ENCODE measurements at regions of chr6 and their contacts with region 1.

Region 1: DNA sequence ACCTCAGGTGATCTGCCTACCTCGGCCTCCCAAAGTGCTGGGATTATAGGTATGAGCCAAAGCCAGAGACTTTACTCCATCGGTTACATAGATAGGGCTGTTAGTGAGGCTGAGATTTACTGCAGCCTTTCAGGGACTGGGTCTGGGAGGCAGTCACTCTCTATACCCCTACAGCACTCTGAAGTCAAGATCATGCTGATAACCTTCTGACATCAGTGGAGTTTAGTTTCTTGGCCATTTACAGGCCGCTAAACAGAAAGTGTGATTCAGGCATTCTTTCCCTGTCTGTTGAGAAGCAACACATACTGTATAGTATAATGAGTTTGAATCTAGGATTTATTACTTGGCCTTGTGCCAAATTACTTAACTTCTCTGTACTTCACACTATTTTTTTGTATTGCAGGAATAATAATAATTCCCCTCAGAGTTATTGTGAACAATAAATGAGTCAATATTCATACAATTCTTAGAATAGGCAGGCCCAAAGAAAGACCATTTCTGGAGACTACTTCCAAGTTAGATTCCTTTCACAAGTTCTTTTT is 4.0 kb downstream of the ZNF391 start:
- DNase-seq: no peak
- H3K4me3 ChIP-seq: no peak overlapping the region
- H3K27ac ChIP-seq: no peak overlapping the region
- H3K4me1 ChIP-seq: peaks cover 0 to 17% (median 13%) of the 10 kb centered on the region in 4 donors
- H3K27me3 ChIP-seq: no peaks in the 10 kb centered on the region
- CTCF ChIP-seq: no peak
- EP300 ChIP-seq: no peak
- POLR2A ChIP-seq: no peak

Region 2: DNA sequence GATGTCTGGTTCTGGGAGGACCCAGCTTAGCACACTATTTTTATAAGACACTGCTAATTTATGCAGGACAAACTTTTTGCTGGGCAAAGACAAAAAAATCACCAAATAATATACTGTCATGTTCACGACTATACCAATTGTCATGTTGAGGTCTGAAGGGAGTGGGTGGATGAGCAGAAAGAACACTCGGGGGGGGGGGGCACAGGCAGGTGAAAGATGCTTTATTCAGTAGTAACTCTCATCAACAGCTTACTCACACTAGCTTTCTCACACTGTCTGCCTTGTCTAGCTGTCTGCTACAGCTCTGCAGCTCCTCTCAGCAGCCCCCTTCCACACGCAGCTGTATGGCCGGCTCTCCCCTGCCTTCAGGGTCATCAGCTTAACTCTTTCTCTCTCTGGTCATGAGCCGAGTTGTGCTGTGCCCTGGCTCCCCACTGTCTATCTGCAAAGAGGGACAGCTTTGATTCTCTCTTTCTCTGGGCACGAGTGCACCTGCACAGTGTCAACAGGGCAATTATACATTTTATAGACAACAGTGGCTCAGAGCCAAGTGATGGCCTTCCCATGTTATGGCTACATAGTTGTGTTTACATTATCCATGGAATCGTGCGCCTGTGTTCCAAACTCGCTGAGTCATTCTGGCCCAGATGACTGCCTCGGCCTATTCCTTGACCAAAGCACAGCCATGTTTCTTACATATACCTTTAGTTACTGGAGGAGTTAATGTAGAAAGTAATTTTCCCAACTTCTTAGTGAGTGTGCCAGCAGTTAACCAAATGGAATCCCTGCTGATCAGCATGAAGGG is 332.7 kb before region 1 on chr6:
- intact Hi-C with region 1: no loop called
- DNase-seq: peak in 1 of 2 donors; percentile 10
- H3K4me3 ChIP-seq: no peak overlapping the region
- H3K27ac ChIP-seq: no peak overlapping the region
- H3K4me1 ChIP-seq: no peaks in the 10 kb centered on the region
- H3K27me3 ChIP-seq: peaks cover 0 to 13% (median 0%) of the 10 kb centered on the region in 3 donors
- CTCF ChIP-seq: no peak
- EP300 ChIP-seq: no peak
- POLR2A ChIP-seq: no peak

Region 3: DNA sequence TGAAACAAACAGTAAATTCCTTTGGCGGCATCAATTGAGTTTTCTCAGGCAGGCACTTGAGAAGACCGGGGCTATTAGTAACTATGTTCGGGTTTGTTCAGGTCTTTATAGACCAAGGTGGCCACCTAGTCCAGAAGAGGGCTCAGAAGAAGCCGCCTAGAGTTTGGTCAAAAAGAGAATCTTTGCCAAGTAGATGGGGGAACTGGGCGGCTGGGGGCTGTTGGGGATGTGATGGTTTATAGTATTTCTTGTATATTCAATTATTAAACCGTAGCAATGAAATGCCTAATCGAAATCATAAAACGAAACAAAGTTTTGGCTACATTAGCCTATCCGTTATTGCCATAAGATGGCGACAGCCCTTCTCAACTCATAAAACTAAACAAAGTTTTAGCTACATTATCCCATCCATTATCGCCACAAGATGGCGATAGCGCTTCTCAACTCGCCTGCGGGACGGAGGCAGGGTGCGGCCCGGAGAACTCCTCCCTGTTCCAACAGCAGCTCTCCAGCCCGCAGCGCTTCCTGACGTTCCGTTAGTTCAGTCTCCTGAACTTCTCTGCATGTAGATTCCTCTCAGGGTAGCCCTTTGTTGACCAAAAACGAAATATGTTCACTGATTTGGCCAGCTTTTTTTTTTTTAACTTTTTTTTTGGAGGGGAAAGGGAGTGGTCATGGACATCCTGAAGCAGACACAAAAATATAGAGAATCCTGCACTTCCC is 265.6 kb before region 1 on chr6:
- intact Hi-C with region 1: no loop called
- DNase-seq: peak; percentile 89 to 97
- H3K4me3 ChIP-seq: peak overlapping the region; percentile 15 to 34 (median 28)
- H3K27ac ChIP-seq: peak overlapping the region in 3 of 5 donors; percentile 50 to 79 (median 61)
- H3K4me1 ChIP-seq: peaks cover 0 to 22% (median 6%) of the 10 kb centered on the region in 4 donors
- H3K27me3 ChIP-seq: peaks cover 0 to 5% (median 0%) of the 10 kb centered on the region in 3 donors
- CTCF ChIP-seq: peak in 5 of 7 experiments; percentile 46 to 81 (median 65)
- EP300 ChIP-seq: no peak
- POLR2A ChIP-seq: no peak

Region 4: DNA sequence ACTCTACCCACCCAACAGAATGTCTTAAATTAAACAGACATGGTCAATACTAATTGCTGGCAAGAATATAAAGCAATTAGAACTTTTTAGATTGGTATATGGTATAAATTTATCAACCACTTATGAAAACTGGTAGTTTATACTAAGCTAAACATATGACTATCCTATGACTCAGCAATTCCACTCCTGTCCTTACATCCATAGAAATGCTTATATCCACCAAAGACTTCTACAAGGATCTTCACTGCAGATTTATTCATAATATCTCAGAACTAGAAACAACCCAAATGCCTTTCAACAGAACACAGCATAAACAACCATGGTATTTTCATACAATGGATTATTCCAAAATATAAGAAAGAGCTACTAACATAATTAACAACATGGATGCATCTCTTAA is 75.8 kb after region 1 on chr6:
- intact Hi-C with region 1: loop called (anchors 5 kb)
- DNase-seq: no peak
- H3K4me3 ChIP-seq: no peak overlapping the region
- H3K27ac ChIP-seq: no peak overlapping the region
- H3K4me1 ChIP-seq: peaks cover 13 to 40% (median 25%) of the 10 kb centered on the region in 4 donors
- H3K27me3 ChIP-seq: no peaks in the 10 kb centered on the region
- CTCF ChIP-seq: no peak
- EP300 ChIP-seq: no peak
- POLR2A ChIP-seq: no peak